ENCODE measurements at regions of chr16 and their contacts with region 1.

Region 1: DNA sequence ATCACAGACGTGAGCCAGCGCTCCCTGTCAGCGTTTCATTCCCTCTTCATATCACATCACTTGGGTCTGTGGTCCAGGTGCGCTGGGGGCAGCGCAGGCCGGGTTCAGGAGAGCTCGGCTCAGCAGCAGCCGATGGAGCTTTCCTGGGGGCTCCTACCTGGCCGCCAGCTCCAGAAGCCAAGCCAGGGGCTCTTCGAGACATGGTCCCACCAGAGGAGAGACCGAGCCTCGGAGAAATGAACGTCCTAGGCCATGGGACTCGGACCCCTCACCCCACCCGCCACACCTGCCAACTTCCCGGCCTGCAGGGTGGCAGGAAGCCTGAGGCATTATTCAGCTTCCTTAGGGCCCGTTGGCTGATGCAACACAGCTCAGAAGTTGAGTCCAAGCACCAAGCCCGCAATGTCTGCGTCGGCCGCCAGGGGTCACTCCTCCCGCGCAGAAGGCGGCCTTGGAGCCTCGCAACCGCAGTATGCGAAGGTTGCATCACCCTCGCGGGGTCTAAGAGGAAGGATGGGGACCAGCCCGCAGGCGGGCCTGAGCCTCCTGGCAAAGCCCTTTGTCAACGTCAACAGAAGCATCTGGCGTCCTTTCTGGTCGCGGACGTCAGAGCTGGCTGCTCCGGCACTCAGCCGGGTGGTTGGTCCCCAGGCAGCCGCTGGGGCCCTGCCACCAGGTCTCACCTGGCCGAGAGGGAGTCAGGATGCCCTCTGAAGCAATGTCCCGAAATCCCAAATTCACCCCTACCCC is 13.2 kb upstream of the KLHDC4 start:
- DNase-seq: peak; percentile 88
- ATAC-seq: peak; percentile 82
- H3K4me3 ChIP-seq: no peak overlapping the region
- H3K27ac ChIP-seq: peak overlapping the region; percentile 63
- H3K4me1 ChIP-seq: peaks cover 44% of the 10 kb centered on the region
- H3K27me3 ChIP-seq: no peaks in the 10 kb centered on the region
- CTCF ChIP-seq: peak; percentile 100
- EP300 ChIP-seq: peak; percentile 77 to 84
- POLR2A ChIP-seq: peak in 1 of 2 experiments; percentile 21; a peak in 1 of 4 replicates
- RAD21 ChIP-seq: peak; percentile 100

Region 2: GRCh38 chr16:87806603-87807546 is 27.9 kb after region 1 on chr16:
- CTCF ChIA-PET with region 1: interaction called, 3 read pairs
- POLR2A ChIA-PET with region 1: interaction called, 53 read pairs
- in situ Hi-C with region 1: no loop called
- intact Hi-C with region 1: loop called (anchors 2 kb)
- DNase-seq: peak; percentile 61
- ATAC-seq: peak; percentile 71
- H3K4me3 ChIP-seq: peak overlapping the region; percentile 38 to 66 (median 50)
- H3K27ac ChIP-seq: peak overlapping the region; percentile 23
- H3K4me1 ChIP-seq: peaks cover 62% of the 10 kb centered on the region
- H3K27me3 ChIP-seq: peaks cover 0 to 11% of the 10 kb centered on the region in 2 experiments; a peak in 3 of 5 replicates
- CTCF ChIP-seq: no peak
- EP300 ChIP-seq: no peak
- POLR2A ChIP-seq: peak; percentile 42 to 68; a peak in 3 of 4 replicates
- RAD21 ChIP-seq: no peak; the same call in 1 of the 2 replicates

Region 3: GRCh38 chr16:87828071-87828971 is 49.3 kb after region 1 on chr16:
- CTCF ChIA-PET with region 1: interaction called, 3 read pairs
- POLR2A ChIA-PET with region 1: interaction called, 6 read pairs
- in situ Hi-C with region 1: no loop called
- intact Hi-C with region 1: loop called (anchors 5 kb)
- DNase-seq: no peak
- ATAC-seq: peak; percentile 10
- H3K4me3 ChIP-seq: no peak overlapping the region
- H3K27ac ChIP-seq: no peak overlapping the region
- H3K4me1 ChIP-seq: peaks cover 49% of the 10 kb centered on the region
- H3K27me3 ChIP-seq: peaks cover 6 to 24% of the 10 kb centered on the region in 2 experiments; a peak in 4 of 5 replicates
- CTCF ChIP-seq: 0 out of 2 replicates have a peak, but pooled peaks have one; percentile 29
- EP300 ChIP-seq: no peak
- POLR2A ChIP-seq: peak in 1 of 2 experiments; percentile 35; a peak in 2 of 4 replicates
- RAD21 ChIP-seq: no peak

Region 4: GRCh38 chr16:87853411-87854052 is 74.5 kb after region 1 on chr16:
- CTCF ChIA-PET with region 1: interaction called, 38 read pairs
- POLR2A ChIA-PET with region 1: interaction called, 44 read pairs
- in situ Hi-C with region 1: loop called (anchors 5 kb)
- intact Hi-C with region 1: loop called (anchors 2 kb)
- DNase-seq: peak; percentile 89
- ATAC-seq: peak; percentile 2
- H3K4me3 ChIP-seq: peak overlapping the region in 2 of 3 experiments; percentile 18 to 62; a peak in 4 of 6 replicates
- H3K27ac ChIP-seq: peak overlapping the region; percentile 98
- H3K4me1 ChIP-seq: peaks cover 100% of the 10 kb centered on the region
- H3K27me3 ChIP-seq: no peaks in the 10 kb centered on the region
- CTCF ChIP-seq: peak; percentile 39
- EP300 ChIP-seq: peak; percentile 12 to 63; a peak in 3 of 4 replicates
- POLR2A ChIP-seq: peak in 1 of 2 experiments; percentile 82; a peak in 2 of 4 replicates
- RAD21 ChIP-seq: peak; percentile 36; the same call in 1 of the 2 replicates

Region 5: DNA sequence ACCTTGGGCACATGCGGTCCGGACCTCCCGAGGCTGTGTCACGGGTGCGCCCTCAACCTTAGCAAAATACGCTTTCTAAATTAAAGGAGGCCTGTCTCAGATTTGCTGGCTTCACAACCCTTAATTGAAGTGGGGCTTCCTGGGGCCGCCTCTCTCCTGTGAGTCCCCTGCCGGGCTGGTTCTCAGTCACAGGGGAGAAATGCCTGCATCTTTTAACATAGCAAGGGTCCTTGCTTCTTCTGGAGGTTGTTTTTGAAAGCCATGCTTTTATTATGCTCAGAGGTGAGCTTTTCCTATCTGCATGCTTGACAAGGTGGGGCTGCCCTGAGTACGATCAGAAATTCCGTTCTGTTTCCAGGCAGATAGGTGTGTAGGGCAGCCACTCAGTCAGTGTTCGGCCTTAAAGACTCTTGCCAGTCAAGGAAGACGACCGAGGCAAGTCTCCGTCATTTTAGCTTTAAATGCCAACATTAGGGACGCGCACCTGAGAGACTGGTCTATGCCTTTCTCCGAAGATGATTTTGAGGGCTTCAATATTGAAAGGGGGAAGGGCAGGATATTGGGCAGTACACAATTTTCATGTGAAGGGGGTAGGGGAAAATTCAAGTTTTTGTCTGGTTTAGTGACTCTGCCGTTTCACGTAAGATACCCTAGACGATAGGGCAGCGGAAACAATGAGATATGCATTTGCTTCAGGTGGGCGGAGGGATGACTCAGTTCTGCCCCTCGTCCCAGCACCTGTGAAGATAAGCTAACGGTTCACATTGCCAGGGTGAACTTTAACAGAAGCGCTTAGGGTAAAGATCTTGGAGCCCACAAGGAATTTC is 95.8 kb after region 1 on chr16:
- CTCF ChIA-PET with region 1: interaction called, 154 read pairs
- POLR2A ChIA-PET with region 1: interaction called, 197 read pairs
- in situ Hi-C with region 1: no loop called
- intact Hi-C with region 1: loop called (anchors 1 kb)
- DNase-seq: no peak
- ATAC-seq: no peak
- H3K4me3 ChIP-seq: no peak overlapping the region
- H3K27ac ChIP-seq: no peak overlapping the region
- H3K4me1 ChIP-seq: peaks cover 79% of the 10 kb centered on the region
- H3K27me3 ChIP-seq: no peaks in the 10 kb centered on the region
- CTCF ChIP-seq: no peak
- EP300 ChIP-seq: no peak
- POLR2A ChIP-seq: no peak
- RAD21 ChIP-seq: no peak

Region 6: DNA sequence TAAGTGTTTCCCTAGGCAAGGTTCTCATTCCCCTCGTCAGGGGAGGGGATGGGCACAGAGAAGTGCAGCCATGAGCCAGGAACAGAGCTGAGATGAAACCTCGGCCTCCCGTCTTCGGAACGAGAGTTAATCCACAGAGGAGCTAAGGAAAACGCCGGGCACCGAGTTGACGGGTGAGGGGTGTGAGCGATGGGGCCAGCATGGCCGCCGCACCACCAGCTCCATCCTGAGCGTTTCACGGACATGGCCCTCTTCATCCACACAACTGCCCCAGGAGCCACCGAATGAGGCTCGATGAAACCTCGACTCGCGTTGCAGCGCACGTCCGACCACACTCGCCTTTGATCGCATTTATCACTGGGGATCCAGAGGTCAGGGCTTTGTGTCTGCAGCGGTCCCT is 135.8 kb after region 1 on chr16:
- CTCF ChIA-PET with region 1: interaction called, 16 read pairs
- POLR2A ChIA-PET with region 1: no interaction called
- in situ Hi-C with region 1: no loop called
- intact Hi-C with region 1: no loop called
- DNase-seq: no peak
- ATAC-seq: no peak
- H3K4me3 ChIP-seq: no peak overlapping the region
- H3K27ac ChIP-seq: no peak overlapping the region
- H3K4me1 ChIP-seq: no peaks in the 10 kb centered on the region
- H3K27me3 ChIP-seq: no peaks in the 10 kb centered on the region
- CTCF ChIP-seq: no peak
- EP300 ChIP-seq: no peak
- POLR2A ChIP-seq: no peak
- RAD21 ChIP-seq: no peak

Measured in HepG2 (cell line).